ENCODE measurements at regions of chr5 and their contacts with region 1.

Region 1: GRCh38 chr5:150409638-150410523 is 2.8 kb downstream of the CD74 start:
- DNase-seq: peak; percentile 84
- ATAC-seq: peak; percentile 13
- H3K4me3 ChIP-seq: peak overlapping the region; percentile 99
- H3K27ac ChIP-seq: peak overlapping the region; percentile 100
- H3K4me1 ChIP-seq: peaks cover 32% of the 10 kb centered on the region
- H3K27me3 ChIP-seq: no peaks in the 10 kb centered on the region
- CTCF ChIP-seq: no peak
- EP300 ChIP-seq: no peak
- POLR2A ChIP-seq: peak; percentile 89
- RAD21 ChIP-seq: no peak

Region 2: DNA sequence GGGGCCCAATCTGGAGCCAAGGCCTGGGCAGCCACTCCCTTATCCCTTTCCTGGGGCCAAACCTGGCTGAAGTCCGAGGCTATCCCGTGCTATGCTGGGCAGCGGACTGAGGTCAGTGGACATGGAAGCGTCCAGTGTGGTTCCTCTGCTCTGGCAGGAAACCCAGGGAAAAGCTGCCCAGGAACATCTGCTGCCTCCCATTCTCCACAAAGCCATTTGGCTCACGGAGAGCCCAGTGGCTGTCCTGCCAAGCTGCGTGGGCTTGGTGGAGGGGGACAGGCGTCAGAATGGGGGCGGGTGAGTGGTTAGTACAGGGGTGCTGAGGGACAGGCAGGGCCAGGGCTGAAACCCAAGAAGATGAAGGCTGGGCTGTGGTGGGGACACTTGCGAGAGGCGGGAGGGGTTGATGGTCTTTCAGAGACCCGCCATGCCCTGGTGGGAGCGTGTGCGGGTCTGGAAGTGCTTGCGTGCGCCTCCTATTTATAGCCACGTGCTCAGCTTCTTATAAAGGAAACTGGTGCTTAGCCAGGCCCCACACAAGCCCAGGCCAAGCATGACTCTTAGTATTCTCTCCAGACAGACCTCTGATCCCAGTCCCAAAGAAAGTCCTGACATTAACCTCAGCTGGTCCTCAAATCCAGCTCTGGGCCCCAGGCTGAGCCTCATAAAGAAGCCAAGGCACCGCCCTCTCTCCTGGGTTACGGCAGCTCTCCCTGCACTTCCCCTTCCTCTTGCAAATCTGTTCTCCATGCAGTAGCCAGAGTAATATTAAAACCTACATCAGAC is 229.4 kb before region 1 on chr5:
- CTCF ChIA-PET with region 1: no interaction called
- POLR2A ChIA-PET with region 1: no interaction called
- RAD21 ChIA-PET with region 1: no interaction called
- SMC1A ChIA-PET with region 1: no interaction called
- in situ Hi-C with region 1: no loop called
- intact Hi-C with region 1: no loop called
- DNase-seq: no peak
- ATAC-seq: no peak
- H3K4me3 ChIP-seq: no peak overlapping the region
- H3K27ac ChIP-seq: no peak overlapping the region
- H3K4me1 ChIP-seq: no peaks in the 10 kb centered on the region
- H3K27me3 ChIP-seq: no peaks in the 10 kb centered on the region; a peak in 2 of 4 replicates
- CTCF ChIP-seq: no peak
- EP300 ChIP-seq: no peak
- POLR2A ChIP-seq: no peak
- RAD21 ChIP-seq: no peak

Region 3: GRCh38 chr5:150428106-150428876 is 18.4 kb after region 1 on chr5:
- CTCF ChIA-PET with region 1: interaction called, 274 read pairs
- POLR2A ChIA-PET with region 1: interaction called, 44 read pairs
- RAD21 ChIA-PET with region 1: interaction called, 49 read pairs
- SMC1A ChIA-PET with region 1: interaction called, 23 read pairs
- in situ Hi-C with region 1: no loop called
- intact Hi-C with region 1: no loop called
- DNase-seq: no peak
- ATAC-seq: peak; percentile 29
- H3K4me3 ChIP-seq: no peak overlapping the region
- H3K27ac ChIP-seq: no peak overlapping the region
- H3K4me1 ChIP-seq: peaks cover 7% of the 10 kb centered on the region
- H3K27me3 ChIP-seq: no peaks in the 10 kb centered on the region
- CTCF ChIP-seq: no peak
- EP300 ChIP-seq: no peak
- POLR2A ChIP-seq: no peak
- RAD21 ChIP-seq: no peak

Measured in GM12878 (cell line).